ENCODE measurements at regions of chr16 and their contacts with region 1.

Region 1: DNA sequence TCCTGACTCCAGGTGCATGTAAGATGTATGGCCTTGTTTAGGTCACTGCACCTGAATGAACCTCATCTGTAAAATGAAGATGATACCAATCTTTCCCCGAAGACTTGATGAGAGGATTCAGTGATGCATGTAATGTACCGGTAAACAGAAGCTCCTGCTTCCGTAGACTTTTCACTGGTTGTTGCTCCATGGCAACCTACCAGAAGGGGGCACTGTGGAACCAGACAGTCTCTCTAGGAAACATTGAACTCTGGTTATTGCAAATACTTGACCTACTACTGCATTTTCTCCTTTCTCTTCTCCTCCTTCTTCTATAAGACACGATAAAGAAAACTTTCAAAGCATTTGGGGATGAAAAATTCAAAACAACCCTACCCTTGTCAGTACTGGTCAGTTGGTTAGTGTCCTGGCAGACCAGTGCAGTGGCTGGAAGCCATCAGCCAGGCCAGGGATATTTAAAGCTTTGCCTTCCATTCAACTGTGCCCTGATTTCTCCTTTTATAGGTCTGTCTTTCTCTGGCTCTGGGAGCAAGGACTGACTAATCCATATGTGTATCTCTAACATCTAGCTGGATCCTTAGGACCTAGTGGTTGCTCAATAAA is 667.4 kb upstream of the SALL1 start:
- DNase-seq: peak; percentile 54
- ATAC-seq: no peak
- H3K4me3 Mint-ChIP-seq: no peak overlapping the region
- H3K27ac Mint-ChIP-seq: no peak overlapping the region
- H3K4me1 Mint-ChIP-seq: no peaks in the 10 kb centered on the region
- H3K27me3 Mint-ChIP-seq: no peaks in the 10 kb centered on the region

Region 2: GRCh38 chr16:51577621-51578303 is 240.7 kb before region 1 on chr16:
- CTCF ChIA-PET with region 1: no interaction called
- POLR2A ChIA-PET with region 1: no interaction called
- intact Hi-C with region 1: no loop called
- DNase-seq: no peak
- ATAC-seq: no peak
- H3K4me3 Mint-ChIP-seq: no peak overlapping the region
- H3K27ac Mint-ChIP-seq: no peak overlapping the region
- H3K4me1 Mint-ChIP-seq: no peaks in the 10 kb centered on the region
- H3K27me3 Mint-ChIP-seq: no peaks in the 10 kb centered on the region

Region 3: DNA sequence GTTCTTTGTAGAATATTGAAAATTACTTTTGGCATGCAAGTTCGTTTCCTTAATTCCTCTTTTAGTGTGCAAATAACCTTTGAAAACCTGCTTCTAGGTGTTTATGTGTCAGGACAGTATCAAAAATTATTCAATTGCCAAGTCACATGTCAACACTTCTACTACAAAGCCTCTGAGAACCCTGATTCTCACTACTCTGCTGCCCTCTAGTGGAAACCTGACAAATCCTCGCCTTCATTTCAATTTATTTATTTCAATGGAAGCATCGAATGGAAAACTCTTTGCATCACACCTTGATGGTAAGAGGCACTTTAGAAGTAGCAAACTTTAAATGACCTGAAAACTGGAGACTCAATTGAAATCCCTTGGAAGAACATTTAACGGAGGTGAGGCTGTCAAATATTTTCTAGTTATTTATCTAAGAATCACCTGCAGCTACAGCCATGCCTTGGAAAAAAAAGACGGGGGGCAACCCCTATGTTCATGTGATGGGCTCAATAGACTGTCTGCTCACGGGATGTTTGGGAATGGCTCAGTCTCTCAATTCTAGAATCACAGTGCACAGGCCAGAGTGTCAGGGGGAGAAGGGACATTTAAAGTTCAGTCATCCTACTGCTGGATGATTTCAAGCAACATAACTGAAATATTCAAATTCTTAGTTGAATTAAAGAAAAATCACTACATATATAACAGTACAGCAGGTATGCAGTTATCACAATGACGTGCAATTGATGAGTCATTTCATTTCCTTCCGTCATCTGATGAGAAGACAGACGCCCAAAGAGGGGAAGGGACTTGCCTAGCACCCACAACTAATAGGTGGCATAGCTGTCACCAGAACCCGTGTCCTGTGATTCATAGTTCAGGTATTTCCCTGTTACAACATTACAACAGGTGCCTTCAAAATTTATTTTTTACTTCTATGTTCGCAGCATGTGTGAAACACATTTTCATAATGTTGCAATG is 164.6 kb after region 1 on chr16:
- CTCF ChIA-PET with region 1: interaction called, 5 read pairs
- POLR2A ChIA-PET with region 1: no interaction called
- intact Hi-C with region 1: loop called (anchors 2 to 5 kb)
- DNase-seq: peak; percentile 34
- ATAC-seq: no peak
- H3K4me3 Mint-ChIP-seq: no peak overlapping the region
- H3K27ac Mint-ChIP-seq: no peak overlapping the region
- H3K4me1 Mint-ChIP-seq: no peaks in the 10 kb centered on the region
- H3K27me3 Mint-ChIP-seq: no peaks in the 10 kb centered on the region

Measured in activated CD4-positive, alpha-beta T cell treated with anti-CD3 and anti-CD28 coated beads for 36 hours (primary cell).